SK-N-SH (cell line): ENCODE measurements at regions of chr11 and their contacts with region 1.

Region 1: DNA sequence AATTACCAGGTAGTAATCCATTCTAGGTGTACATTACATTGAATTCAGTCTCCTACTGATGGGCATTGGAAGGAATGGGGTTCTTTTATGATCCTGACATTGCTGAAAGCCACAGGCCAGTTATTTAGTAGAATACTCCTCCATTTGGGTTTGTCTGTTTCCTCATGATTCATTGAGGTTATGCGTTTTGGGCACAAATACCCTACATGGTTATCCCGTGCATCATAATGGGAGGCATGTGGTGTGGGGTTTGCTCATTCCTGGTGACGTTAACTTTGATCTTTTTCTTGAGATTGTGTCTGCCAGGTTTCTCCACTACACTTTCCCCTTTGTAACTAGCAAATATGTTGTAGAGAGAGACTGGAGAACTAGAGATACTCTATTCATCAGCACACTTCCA is 5.5 kb downstream of the FOLR3 start:
- DNase-seq: no peak
- H3K4me3 ChIP-seq: no peak overlapping the region
- H3K27ac ChIP-seq: peak overlapping the region in 1 of 2 experiments; percentile 37; a peak in 1 of 4 replicates
- H3K4me1 ChIP-seq: no peaks in the 10 kb centered on the region; a peak in 1 of 4 replicates
- H3K27me3 ChIP-seq: no peaks in the 10 kb centered on the region
- CTCF ChIP-seq: no peak
- EP300 ChIP-seq: no peak
- RAD21 ChIP-seq: no peak

Region 2: GRCh38 chr11:72030472-72031045 is 110.5 kb before region 1 on chr11:
- CTCF ChIA-PET with region 1: interaction called, 35 read pairs
- POLR2A ChIA-PET with region 1: interaction called, 4 read pairs
- DNase-seq: no peak
- H3K4me3 ChIP-seq: no peak overlapping the region
- H3K27ac ChIP-seq: no peak overlapping the region
- H3K4me1 ChIP-seq: peaks cover 2 to 8% of the 10 kb centered on the region in 2 experiments; a peak in 3 of 4 replicates
- H3K27me3 ChIP-seq: no peaks in the 10 kb centered on the region
- CTCF ChIP-seq: no peak
- EP300 ChIP-seq: no peak
- RAD21 ChIP-seq: no peak

Region 3: GRCh38 chr11:72061739-72062396 is 79.2 kb before region 1 on chr11:
- CTCF ChIA-PET with region 1: no interaction called
- POLR2A ChIA-PET with region 1: no interaction called
- DNase-seq: no peak
- H3K4me3 ChIP-seq: no peak overlapping the region
- H3K27ac ChIP-seq: no peak overlapping the region
- H3K4me1 ChIP-seq: peaks cover under 1% of the 10 kb centered on the region in 2 experiments; a peak in 2 of 4 replicates
- H3K27me3 ChIP-seq: no peaks in the 10 kb centered on the region
- CTCF ChIP-seq: no peak
- EP300 ChIP-seq: no peak
- RAD21 ChIP-seq: no peak

Region 4: GRCh38 chr11:72112321-72113219 is 28.5 kb before region 1 on chr11 and contains the start of gene ANAPC15:
- CTCF ChIA-PET with region 1: interaction called, 11 read pairs
- POLR2A ChIA-PET with region 1: no interaction called
- DNase-seq: peak; percentile 84
- H3K4me3 ChIP-seq: peak within 1 kb of the TSS; percentile 71 to 77
- H3K27ac ChIP-seq: peak within 1 kb of the TSS; percentile 96 to 99
- H3K4me1 ChIP-seq: peaks cover 6 to 16% of the 10 kb centered on the region in 2 experiments; a peak in 3 of 4 replicates
- H3K27me3 ChIP-seq: no peaks in the 10 kb centered on the region
- CTCF ChIP-seq: no peak
- EP300 ChIP-seq: peak in 1 of 2 experiments; percentile 23; a peak in 1 of 4 replicates
- RAD21 ChIP-seq: no peak; the same call in 1 of the 2 replicates
- polyA plus RNA-seq, gene ANAPC15: 85.6 and 92.3 TPM in 2 replicates

Region 5: GRCh38 chr11:72154816-72155215 is 13.8 kb after region 1 on chr11:
- CTCF ChIA-PET with region 1: interaction called, 30 read pairs
- POLR2A ChIA-PET with region 1: no interaction called
- DNase-seq: no peak
- H3K4me3 ChIP-seq: no peak overlapping the region
- H3K27ac ChIP-seq: no peak overlapping the region
- H3K4me1 ChIP-seq: no peaks in the 10 kb centered on the region
- H3K27me3 ChIP-seq: peaks cover 11% of the 10 kb centered on the region; the same call in 1 of the 2 replicates
- CTCF ChIP-seq: no peak
- EP300 ChIP-seq: no peak
- RAD21 ChIP-seq: no peak

Region 6: DNA sequence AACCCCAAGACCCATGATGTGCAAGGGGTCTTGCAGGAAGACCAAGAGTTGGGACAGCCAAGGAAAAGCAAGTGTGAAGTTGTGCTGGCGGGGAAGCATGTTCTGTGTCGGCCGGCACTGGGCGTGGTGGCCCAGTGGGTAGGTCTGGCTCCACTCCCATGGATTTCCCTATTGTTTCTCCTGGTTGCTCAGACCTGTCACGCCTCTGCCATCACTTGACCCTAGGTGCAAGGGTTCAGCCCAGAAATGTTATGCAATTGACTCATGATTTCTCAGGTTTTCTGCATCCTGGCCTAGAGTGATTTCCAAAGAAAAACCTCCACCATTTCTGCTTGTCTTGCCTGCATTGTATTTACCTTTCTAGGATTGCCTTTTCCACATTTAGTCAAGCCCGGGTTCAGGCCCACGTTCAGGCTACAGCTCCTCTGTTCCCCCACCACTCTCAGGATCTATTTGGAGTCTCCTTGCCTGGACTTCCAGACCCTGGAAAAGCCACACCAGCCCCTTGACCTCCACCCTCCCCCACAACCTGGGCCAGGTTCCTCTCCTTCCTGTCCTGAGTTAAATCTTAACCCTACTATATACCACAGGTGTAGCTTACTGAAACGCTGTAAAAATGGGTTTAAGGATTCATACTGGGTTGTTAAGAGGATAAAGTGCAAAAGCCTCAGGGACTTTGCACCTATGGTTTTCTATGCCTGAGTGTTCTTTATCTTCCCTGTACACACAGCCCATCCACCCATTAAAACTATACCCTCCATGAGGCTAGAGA is 33.4 kb after region 1 on chr11:
- CTCF ChIA-PET with region 1: interaction called, 27 read pairs
- POLR2A ChIA-PET with region 1: no interaction called
- DNase-seq: no peak
- H3K4me3 ChIP-seq: no peak overlapping the region
- H3K27ac ChIP-seq: no peak overlapping the region
- H3K4me1 ChIP-seq: no peaks in the 10 kb centered on the region
- H3K27me3 ChIP-seq: peaks cover 7% of the 10 kb centered on the region; the same call in 1 of the 2 replicates
- CTCF ChIP-seq: no peak
- EP300 ChIP-seq: no peak
- RAD21 ChIP-seq: no peak